ENCODE measurements at regions of chr11 and their contacts with region 1.

Region 1: GRCh38 chr11:33362051-33362910 is 105.1 kb downstream of the HIPK3 start:
- DNase-seq: peak; percentile 46
- CTCF ChIP-seq: peak; percentile 55

Region 2: DNA sequence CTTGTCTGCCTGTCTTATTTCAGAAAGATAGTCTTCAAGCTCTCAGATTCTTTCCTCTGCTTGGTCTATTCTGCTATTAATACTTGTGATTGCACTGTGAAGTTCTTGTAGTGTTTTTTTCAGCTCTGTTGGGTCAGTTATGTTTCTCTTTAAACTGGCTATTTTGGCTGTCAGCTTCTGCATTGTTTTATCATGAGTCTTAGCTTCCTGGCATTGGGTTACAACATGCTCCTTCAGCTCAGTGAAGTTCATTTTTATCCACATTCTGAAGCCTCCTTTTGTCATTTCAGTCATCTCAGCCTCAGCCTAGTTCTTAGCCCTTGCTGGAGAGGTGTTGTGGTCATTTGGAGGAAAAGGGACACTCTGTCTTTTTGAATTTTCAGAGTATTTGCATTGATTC is 362.1 kb before region 1 on chr11:
- in situ Hi-C with region 1: no loop called
- DNase-seq: no peak
- CTCF ChIP-seq: no peak

Region 3: DNA sequence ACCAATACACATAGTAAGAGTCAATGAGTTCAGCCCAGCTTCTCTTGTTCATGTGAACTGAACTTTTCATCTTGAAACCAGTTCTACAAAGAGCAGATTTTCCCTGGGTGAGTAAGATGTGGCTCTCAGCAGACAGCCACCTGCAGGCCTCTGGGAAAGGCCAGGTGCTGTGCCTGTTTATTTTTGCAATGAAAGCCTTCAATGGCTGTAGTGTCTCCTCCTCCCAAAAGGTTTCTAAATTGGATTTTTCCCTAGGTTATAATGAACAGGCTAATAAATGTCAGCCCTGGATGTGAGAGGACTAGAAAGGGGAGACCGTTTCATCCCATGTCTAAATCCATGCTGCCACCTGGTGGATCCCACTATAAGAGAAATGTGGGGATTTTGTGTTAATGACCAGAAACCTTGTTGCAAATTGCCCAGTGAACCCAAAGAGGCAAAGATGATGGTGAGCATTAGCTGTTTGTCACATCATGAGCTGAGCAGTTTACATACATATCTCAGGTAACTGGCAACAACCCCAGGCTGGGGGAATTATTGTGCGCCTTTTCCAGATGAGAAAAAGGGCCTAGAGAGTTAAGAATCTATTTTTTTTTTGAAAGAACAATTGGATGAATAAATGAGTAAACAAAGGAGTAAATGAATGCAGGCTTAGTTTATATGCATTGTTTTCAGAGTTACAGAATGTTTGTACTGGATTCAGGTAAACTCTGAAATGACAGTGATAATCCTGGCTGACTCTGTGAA is 325.6 kb after region 1 on chr11:
- in situ Hi-C with region 1: loop called (anchors 5 kb)
- DNase-seq: peak; percentile 51
- CTCF ChIP-seq: peak; percentile 58